CD8-positive, alpha-beta T cell (primary cell): ENCODE measurements at regions of chr22 and their contacts with region 1.

Region 1: GRCh38 chr22:28741758-28742561 is at the starts of genes CHEK2 and HSCB:
- DNase-seq: peak; percentile 94 to 99 (median 96)
- ATAC-seq: peak; percentile 94
- H3K4me3 ChIP-seq: peak within 1 kb of the TSS; percentile 85 to 98
- H3K4me3 Mint-ChIP-seq: peak within 1 kb of the TSS; percentile 88
- H3K27ac ChIP-seq: peak within 1 kb of the TSS; percentile 82 to 94
- H3K27ac Mint-ChIP-seq: peak within 1 kb of the TSS; percentile 92
- H3K4me1 ChIP-seq: peaks cover 13% of the 10 kb centered on the region
- H3K4me1 Mint-ChIP-seq: peaks cover 22% of the 10 kb centered on the region
- H3K27me3 ChIP-seq: no peaks in the 10 kb centered on the region
- H3K27me3 Mint-ChIP-seq: no peaks in the 10 kb centered on the region
- CTCF ChIP-seq: no peak
- total RNA-seq, gene CHEK2: 2.1 to 3.6 TPM
- total RNA-seq, gene HSCB: 4.8 to 5.9 TPM

Region 2: GRCh38 chr22:28772633-28773460 is 30.9 kb after region 1 on chr22 and contains the start of gene CCDC117:
- CTCF ChIA-PET with region 1: no interaction called
- POLR2A ChIA-PET with region 1: interaction called, 8 read pairs
- intact Hi-C with region 1: loop called (anchors 1 kb)
- DNase-seq: peak; percentile 85 to 96 (median 94)
- ATAC-seq: peak; percentile 94
- H3K4me3 ChIP-seq: peak within 1 kb of the TSS; percentile 60 to 65
- H3K4me3 Mint-ChIP-seq: peak within 1 kb of the TSS; percentile 94
- H3K27ac ChIP-seq: peak within 1 kb of the TSS; percentile 68 to 77
- H3K27ac Mint-ChIP-seq: peak within 1 kb of the TSS; percentile 94
- H3K4me1 ChIP-seq: peaks cover 26% of the 10 kb centered on the region
- H3K4me1 Mint-ChIP-seq: peaks cover 30% of the 10 kb centered on the region
- H3K27me3 ChIP-seq: no peaks in the 10 kb centered on the region
- H3K27me3 Mint-ChIP-seq: no peaks in the 10 kb centered on the region
- CTCF ChIP-seq: peak; percentile 31
- total RNA-seq, gene CCDC117: 13.7 to 15.4 TPM

Region 3: DNA sequence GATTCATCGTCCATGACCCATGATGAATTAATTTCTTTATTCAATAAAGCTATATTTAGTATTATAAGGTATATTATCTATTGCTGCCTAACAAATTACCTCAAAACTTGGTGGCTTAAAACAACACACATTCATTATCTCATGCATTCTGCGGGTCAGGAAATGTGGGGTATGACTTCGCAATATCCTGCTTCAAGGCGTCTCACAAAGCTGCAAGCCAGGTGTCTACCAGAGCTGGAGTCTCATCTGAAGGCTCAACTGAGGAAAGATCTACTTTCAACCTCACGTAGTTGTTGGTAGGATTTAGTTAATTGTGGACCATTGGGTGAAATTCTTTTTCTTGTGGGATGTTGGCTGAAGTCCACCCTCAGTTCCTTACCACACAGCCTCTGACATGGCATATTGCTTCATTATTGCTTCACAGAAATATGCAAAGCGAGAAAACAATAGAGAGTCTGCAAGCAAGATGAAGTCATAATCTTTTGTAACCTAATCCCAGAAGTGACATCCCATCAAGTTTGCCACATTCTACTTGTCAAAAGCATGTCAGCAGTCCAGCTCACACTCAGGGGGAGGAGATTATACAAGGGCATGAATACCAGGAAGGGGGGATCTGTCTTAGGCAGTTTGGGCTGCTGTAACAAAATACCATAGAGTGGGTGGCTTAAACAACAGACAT is 376.0 kb after region 1 on chr22:
- CTCF ChIA-PET with region 1: no interaction called
- POLR2A ChIA-PET with region 1: no interaction called
- intact Hi-C with region 1: no loop called
- DNase-seq: no peak
- ATAC-seq: no peak
- H3K4me3 ChIP-seq: no peak overlapping the region
- H3K4me3 Mint-ChIP-seq: no peak overlapping the region
- H3K27ac ChIP-seq: no peak overlapping the region
- H3K27ac Mint-ChIP-seq: no peak overlapping the region
- H3K4me1 ChIP-seq: no peaks in the 10 kb centered on the region
- H3K4me1 Mint-ChIP-seq: no peaks in the 10 kb centered on the region
- H3K27me3 ChIP-seq: no peaks in the 10 kb centered on the region
- H3K27me3 Mint-ChIP-seq: peaks cover 42% of the 10 kb centered on the region
- CTCF ChIP-seq: no peak